ENCODE measurements at regions of chr12 and their contacts with region 1.

Region 1: DNA sequence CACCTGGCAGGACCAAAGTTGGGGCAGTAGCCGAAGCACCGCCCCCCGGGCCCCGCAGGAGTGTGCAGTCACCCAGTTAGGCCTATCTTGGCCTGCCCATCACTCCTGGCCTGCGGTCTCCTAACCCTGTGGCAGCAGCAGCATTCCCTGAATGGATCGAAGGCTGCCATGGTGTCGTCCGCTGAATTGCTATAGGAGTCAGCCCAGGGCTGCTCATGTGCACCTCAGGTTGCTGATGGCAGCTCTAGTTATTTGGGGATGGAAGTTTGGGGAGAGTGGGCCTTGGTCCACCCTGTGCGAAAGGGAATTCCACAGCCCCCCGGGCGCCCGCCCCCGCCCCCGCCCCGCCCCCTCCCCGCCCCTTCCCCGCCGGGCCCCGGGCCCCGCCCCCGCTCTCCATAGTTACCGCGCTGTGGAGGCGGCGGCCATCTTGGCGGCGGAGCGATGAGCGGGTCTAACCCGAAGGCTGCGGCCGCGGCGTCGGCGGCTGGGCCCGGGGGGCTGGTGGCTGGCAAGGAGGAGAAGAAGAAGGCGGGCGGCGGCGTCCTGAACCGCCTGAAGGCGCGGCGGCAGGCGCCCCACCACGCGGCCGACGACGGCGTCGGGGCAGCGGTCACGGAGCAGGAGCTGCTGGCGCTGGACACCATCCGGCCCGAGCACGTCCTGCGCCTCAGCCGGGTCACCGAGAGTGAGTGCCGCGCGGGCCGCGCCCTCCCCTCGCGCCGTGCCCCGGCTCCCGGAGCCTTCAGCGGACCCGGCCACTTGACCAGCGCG is at the start of gene UNC119B:
- DNase-seq: peak; percentile 80
- ATAC-seq: peak; percentile 88
- H3K4me3 ChIP-seq: peak within 1 kb of the TSS; percentile 27 to 89 (median 68)
- H3K4me3 Mint-ChIP-seq: peak within 1 kb of the TSS; percentile 91
- H3K27ac ChIP-seq: peak within 1 kb of the TSS in 1 of 2 donors; percentile 71
- H3K27ac Mint-ChIP-seq: peak within 1 kb of the TSS; percentile 79
- H3K4me1 ChIP-seq: peaks cover 17 to 26% of the 10 kb centered on the region in 2 donors
- H3K4me1 Mint-ChIP-seq: peaks cover 24% of the 10 kb centered on the region
- H3K27me3 ChIP-seq: no peaks in the 10 kb centered on the region
- H3K27me3 Mint-ChIP-seq: no peaks in the 10 kb centered on the region
- CTCF ChIP-seq: no peak
- total RNA-seq, gene UNC119B: 19.2 and 22.7 TPM in 2 replicates

Region 2: GRCh38 chr12:120301962-120302815 is 408.0 kb before region 1 on chr12 and contains the start of gene SIRT4:
- CTCF ChIA-PET with region 1: no interaction called
- POLR2A ChIA-PET with region 1: no interaction called
- intact Hi-C with region 1: no loop called
- DNase-seq: peak; percentile 94
- ATAC-seq: peak; percentile 100
- H3K4me3 ChIP-seq: peak within 1 kb of the TSS; percentile 72 to 99 (median 92)
- H3K4me3 Mint-ChIP-seq: peak within 1 kb of the TSS; percentile 96
- H3K27ac ChIP-seq: peak within 1 kb of the TSS; percentile 16 to 34
- H3K27ac Mint-ChIP-seq: peak within 1 kb of the TSS; percentile 88
- H3K4me1 ChIP-seq: peaks cover 0 to 4% of the 10 kb centered on the region in 2 donors
- H3K4me1 Mint-ChIP-seq: peaks cover 7% of the 10 kb centered on the region
- H3K27me3 ChIP-seq: no peaks in the 10 kb centered on the region
- H3K27me3 Mint-ChIP-seq: no peaks in the 10 kb centered on the region
- CTCF ChIP-seq: peak; percentile 76
- total RNA-seq, gene SIRT4: 2.5 and 4.8 TPM in 2 replicates

Region 3: DNA sequence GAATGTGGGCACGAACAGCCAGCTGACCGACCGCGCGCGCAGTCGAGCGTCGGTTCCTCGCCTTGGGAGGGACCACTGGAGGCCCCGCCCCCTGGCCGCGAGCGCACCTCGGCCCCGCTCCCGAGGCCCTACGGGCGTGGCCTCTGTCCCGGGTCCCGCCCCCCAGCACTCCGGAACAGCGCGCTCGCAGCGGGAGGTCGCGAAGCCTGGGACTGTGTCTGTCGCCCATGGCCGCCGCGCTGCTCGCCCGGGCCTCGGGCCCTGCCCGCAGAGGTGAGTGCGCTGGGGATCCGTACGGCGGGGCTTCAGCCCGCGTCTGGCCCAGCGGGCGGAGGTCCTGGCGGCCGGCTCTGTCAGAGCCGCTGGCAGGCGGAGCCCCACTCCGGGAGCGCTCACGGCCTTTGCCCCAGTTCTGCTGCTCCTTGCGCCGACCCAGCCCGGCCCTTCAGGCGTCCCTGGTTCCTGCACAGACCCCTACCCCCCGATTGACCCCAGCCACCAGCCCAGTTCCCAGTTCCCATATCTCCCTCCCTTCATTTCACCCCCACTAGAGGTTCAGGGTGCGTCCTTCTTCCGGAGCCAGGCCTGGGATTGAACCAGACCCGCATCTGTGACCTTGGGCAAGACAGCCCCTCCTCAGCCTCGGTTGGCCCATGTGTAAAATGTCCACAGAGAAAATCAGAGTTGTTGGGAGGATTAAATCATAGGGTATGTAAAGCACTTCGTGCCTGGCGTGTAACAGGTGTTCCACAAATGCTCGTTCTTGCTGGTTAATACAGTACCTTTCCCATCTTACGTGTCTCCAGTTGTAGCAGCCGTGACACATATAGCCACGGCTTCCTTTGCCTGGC is 15.7 kb after region 1 on chr12 and contains the start of gene ACADS:
- CTCF ChIA-PET with region 1: interaction called, 5 read pairs
- POLR2A ChIA-PET with region 1: no interaction called
- intact Hi-C with region 1: loop called (anchors 1 kb)
- DNase-seq: peak; percentile 91
- ATAC-seq: peak; percentile 100
- H3K4me3 ChIP-seq: peak within 1 kb of the TSS; percentile 44 to 73 (median 63)
- H3K4me3 Mint-ChIP-seq: peak within 1 kb of the TSS; percentile 90
- H3K27ac ChIP-seq: peak within 1 kb of the TSS in 1 of 2 donors; percentile 61
- H3K27ac Mint-ChIP-seq: peak within 1 kb of the TSS; percentile 46
- H3K4me1 ChIP-seq: peaks cover 28 to 30% of the 10 kb centered on the region in 2 donors
- H3K4me1 Mint-ChIP-seq: peaks cover 34% of the 10 kb centered on the region
- H3K27me3 ChIP-seq: no peaks in the 10 kb centered on the region
- H3K27me3 Mint-ChIP-seq: no peaks in the 10 kb centered on the region
- CTCF ChIP-seq: no peak
- total RNA-seq, gene ACADS: 10.0 and 10.1 TPM in 2 replicates

Region 4: GRCh38 chr12:121637231-121637914 is 927.2 kb after region 1 on chr12:
- CTCF ChIA-PET with region 1: no interaction called
- POLR2A ChIA-PET with region 1: no interaction called
- intact Hi-C with region 1: no loop called
- DNase-seq: peak; percentile 79
- ATAC-seq: peak; percentile 90
- H3K4me3 ChIP-seq: peak overlapping the region in 4 of 5 experiments; percentile 19 to 46 (median 37)
- H3K4me3 Mint-ChIP-seq: peak overlapping the region; percentile 67
- H3K27ac ChIP-seq: peak overlapping the region; percentile 86 to 89
- H3K27ac Mint-ChIP-seq: peak overlapping the region; percentile 92
- H3K4me1 ChIP-seq: peaks cover 29 to 40% of the 10 kb centered on the region in 2 donors
- H3K4me1 Mint-ChIP-seq: peaks cover 40% of the 10 kb centered on the region
- H3K27me3 ChIP-seq: no peaks in the 10 kb centered on the region
- H3K27me3 Mint-ChIP-seq: no peaks in the 10 kb centered on the region
- CTCF ChIP-seq: no peak